T-cell (primary cell): ENCODE measurements at regions of chr2 and their contacts with region 1.

Region 1: DNA sequence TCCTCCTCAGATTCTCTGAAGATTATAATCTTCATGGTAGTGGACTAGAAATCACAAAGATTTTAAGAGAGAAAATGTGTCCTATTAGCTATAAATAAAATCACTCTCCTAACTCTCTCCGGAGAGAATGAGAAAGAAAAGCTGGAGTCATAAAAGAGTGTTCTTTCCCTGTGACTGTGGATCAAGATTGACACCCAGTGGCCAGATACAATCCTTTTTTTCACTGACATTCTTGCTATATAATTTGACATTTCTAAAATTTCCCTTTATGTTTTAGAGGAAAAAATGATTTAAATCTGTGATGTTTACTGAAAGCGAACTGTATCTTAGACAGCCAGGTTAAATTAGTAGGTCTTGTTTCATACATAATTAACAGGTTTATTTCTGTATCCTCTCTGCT is 35.4 kb upstream of the LRP2 start:
- DNase-seq: no peak
- ATAC-seq: no peak
- H3K4me3 ChIP-seq: no peak overlapping the region
- H3K4me3 Mint-ChIP-seq: no peak overlapping the region
- H3K27ac ChIP-seq: no peak overlapping the region
- H3K27ac Mint-ChIP-seq: no peak overlapping the region
- H3K4me1 ChIP-seq: no peaks in the 10 kb centered on the region
- H3K4me1 Mint-ChIP-seq: no peaks in the 10 kb centered on the region
- H3K27me3 ChIP-seq: peaks cover 0 to 6% of the 10 kb centered on the region in 2 experiments
- H3K27me3 Mint-ChIP-seq: peaks cover 21 to 35% of the 10 kb centered on the region in 2 donors

Region 2: DNA sequence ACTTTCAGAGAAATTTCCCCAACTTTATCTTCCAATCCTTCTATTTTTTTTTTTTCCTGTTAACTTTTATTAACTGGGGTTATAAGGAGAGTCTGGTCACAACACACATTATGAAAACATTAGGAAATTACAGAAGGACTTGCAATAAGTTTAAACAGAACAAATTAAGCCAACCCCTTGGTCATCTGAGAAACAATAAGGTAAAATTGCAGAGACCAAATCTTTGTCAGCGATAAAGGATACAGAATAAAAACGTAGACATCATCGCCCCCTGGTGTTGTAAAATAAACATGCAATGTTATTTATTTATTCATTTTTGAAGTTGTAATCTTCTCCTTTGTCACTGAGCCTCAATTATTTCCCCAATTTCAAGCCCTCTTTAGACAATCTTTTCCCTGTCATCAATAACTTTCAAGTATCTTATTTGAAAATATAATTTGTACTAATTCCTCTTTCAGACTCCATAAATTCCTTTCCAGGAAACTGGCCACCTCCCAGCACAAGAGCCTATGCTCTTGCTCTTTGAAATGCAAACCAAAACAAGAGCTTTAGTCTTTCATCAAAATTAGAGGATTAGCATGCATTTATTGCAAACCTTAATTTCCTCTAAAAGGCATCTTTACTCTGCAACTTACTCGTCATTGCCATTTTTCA is 477.1 kb before region 1 on chr2:
- CTCF ChIA-PET with region 1: interaction called in 1 of 2 experiments, 10 read pairs
- POLR2A ChIA-PET with region 1: no interaction called
- DNase-seq: peak in 3 of 35 experiments; percentile 9 to 64 (median 11)
- ATAC-seq: no peak
- H3K4me3 ChIP-seq: no peak overlapping the region
- H3K4me3 Mint-ChIP-seq: no peak overlapping the region
- H3K27ac ChIP-seq: no peak overlapping the region
- H3K27ac Mint-ChIP-seq: no peak overlapping the region
- H3K4me1 ChIP-seq: no peaks in the 10 kb centered on the region
- H3K4me1 Mint-ChIP-seq: peaks cover 4 to 7% (median 5%) of the 10 kb centered on the region in 3 donors
- H3K27me3 ChIP-seq: no peaks in the 10 kb centered on the region
- H3K27me3 Mint-ChIP-seq: peaks cover 18 to 31% of the 10 kb centered on the region in 2 donors

Region 3: GRCh38 chr2:169415233-169415748 is 17.6 kb after region 1 on chr2:
- CTCF ChIA-PET with region 1: interaction called in 1 of 2 experiments, 11 read pairs
- POLR2A ChIA-PET with region 1: no interaction called
- DNase-seq: no peak
- ATAC-seq: no peak
- H3K4me3 ChIP-seq: no peak overlapping the region
- H3K4me3 Mint-ChIP-seq: no peak overlapping the region
- H3K27ac ChIP-seq: no peak overlapping the region
- H3K27ac Mint-ChIP-seq: no peak overlapping the region
- H3K4me1 ChIP-seq: no peaks in the 10 kb centered on the region
- H3K4me1 Mint-ChIP-seq: no peaks in the 10 kb centered on the region
- H3K27me3 ChIP-seq: peaks cover 0 to 5% of the 10 kb centered on the region in 2 experiments
- H3K27me3 Mint-ChIP-seq: peaks cover 36 to 38% of the 10 kb centered on the region in 2 donors